PC-9 (cell line): ENCODE measurements at regions of chr1 and their contacts with region 1.

Region 1: DNA sequence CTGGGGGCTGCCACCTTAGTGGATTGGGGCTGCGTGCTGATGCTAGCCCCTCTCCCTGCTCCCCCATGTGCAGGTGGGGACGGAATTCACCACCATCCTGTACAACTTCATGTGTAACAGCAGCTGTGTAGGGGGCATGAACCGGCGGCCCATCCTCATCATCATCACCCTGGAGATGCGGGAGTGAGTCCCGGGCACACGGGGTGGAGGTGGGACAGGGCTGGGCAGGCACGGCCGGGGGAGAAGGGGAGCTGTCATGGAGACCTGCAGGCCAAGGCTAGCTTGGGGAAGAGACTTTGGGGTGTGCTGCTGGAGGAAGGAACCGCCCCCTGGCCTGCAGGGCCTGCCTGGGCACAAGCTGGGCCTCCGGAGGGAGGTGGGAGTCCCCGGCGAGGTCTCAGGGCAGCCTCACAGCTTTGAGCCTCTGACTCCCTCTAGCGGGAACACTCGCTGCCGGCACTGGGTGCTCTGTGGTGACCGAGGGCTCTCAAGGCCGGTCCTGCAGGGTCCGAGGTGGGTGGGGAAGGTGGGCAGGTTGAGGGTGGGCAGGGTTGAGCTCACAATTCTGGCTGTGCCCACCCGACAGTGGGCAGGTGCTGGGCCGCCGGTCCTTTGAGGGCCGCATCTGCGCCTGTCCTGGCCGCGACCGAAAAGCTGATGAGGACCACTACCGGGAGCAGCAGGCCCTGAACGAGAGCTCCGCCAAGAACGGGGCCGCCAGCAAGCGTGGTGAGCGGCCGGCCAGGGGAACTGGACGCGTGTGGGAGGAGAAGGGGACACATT is 25.0 kb upstream of the CCDC27 start:
- DNase-seq: no peak
- H3K4me3 ChIP-seq: no peak overlapping the region
- H3K27ac ChIP-seq: no peak overlapping the region
- H3K4me1 ChIP-seq: no peaks in the 10 kb centered on the region
- H3K27me3 ChIP-seq: 0 out of 2 replicates have a peak, but pooled peaks cover 4% of the 10 kb centered on the region
- CTCF ChIP-seq: peak; percentile 56; the same call in 1 of the 2 replicates

Region 2: GRCh38 chr1:3695326-3696217 is 31.7 kb before region 1 on chr1:
- CTCF ChIA-PET with region 1: interaction called, 10 read pairs
- POLR2A ChIA-PET with region 1: no interaction called
- intact Hi-C with region 1: loop called (anchors 1 kb)
- DNase-seq: peak in 1 of 2 experiments; percentile 43
- H3K4me3 ChIP-seq: peak overlapping the region; percentile 18; the same call in 1 of the 2 replicates
- H3K27ac ChIP-seq: no peak overlapping the region
- H3K4me1 ChIP-seq: no peaks in the 10 kb centered on the region
- H3K27me3 ChIP-seq: peaks cover 68% of the 10 kb centered on the region
- CTCF ChIP-seq: peak; percentile 88